ENCODE measurements at regions of chr5 and their contacts with region 1.

Region 1: GRCh38 chr5:88836195-88836838 is 46.7 kb downstream of the MEF2C start:
- DNase-seq: peak in 1 of 10 donors; percentile 55

Region 2: GRCh38 chr5:88634014-88634413 is 202.3 kb before region 1 on chr5:
- intact Hi-C with region 1: no loop called
- DNase-seq: no peak

Region 3: GRCh38 chr5:88875341-88876234 is 39.3 kb after region 1 on chr5:
- intact Hi-C with region 1: loop called (anchors 5 kb)
- DNase-seq: no peak

Region 4: GRCh38 chr5:88889189-88890069 is 53.1 kb after region 1 on chr5:
- intact Hi-C with region 1: no loop called
- DNase-seq: peak; percentile 37 to 95 (median 70)